K562 (cell line): ENCODE measurements at regions of chr5 and their contacts with region 1.

Region 1: GRCh38 chr5:31581498-31582099 is 49.5 kb downstream of the C5orf22 start:
- DNase-seq: peak in 3 of 4 experiments; percentile 31 to 52 (median 33)
- ATAC-seq: peak; percentile 51; the same call in 1 of the 3 replicates
- H3K4me3 ChIP-seq: no peak overlapping the region
- H3K27ac ChIP-seq: no peak overlapping the region
- H3K4me1 ChIP-seq: no peaks in the 10 kb centered on the region
- H3K27me3 ChIP-seq: peaks cover 0 to 5% of the 10 kb centered on the region in 2 experiments; a peak in 2 of 5 replicates
- CTCF ChIP-seq: peak; percentile 20 to 79 (median 51); a peak in 3 of 6 replicates
- EP300 ChIP-seq: no peak
- POLR2A ChIP-seq: no peak
- RAD21 ChIP-seq: peak; percentile 83 to 87

Region 2: DNA sequence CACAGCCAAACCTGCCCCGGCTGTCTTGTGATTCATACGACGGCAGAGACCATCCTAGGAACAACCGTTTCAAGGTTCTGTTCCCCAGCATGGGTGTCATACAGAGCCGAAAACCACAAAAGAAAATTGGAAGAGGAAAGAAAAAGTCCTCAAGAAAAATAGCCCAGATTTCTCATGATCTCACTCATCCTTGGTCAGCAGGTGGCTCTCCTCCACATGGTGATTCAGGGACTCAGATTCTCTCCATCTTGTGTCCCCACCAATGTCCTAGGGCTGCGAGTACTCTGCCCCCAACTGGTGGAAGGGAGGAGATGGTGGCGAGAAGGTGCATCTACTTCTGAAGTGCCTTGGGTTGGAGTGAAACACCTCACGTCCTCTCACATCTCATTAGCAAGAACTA is 83.0 kb after region 1 on chr5:
- CTCF ChIA-PET with region 1: no interaction called
- POLR2A ChIA-PET with region 1: no interaction called
- in situ Hi-C with region 1: no loop called
- intact Hi-C with region 1: loop called (anchors 5 kb)
- DNase-seq: peak; percentile 50 to 73 (median 60)
- ATAC-seq: peak; percentile 98
- H3K4me3 ChIP-seq: no peak overlapping the region
- H3K27ac ChIP-seq: no peak overlapping the region
- H3K4me1 ChIP-seq: no peaks in the 10 kb centered on the region
- H3K27me3 ChIP-seq: peaks cover 3 to 21% of the 10 kb centered on the region in 2 experiments; a peak in 3 of 5 replicates
- CTCF ChIP-seq: peak; percentile 73 to 93 (median 77)
- EP300 ChIP-seq: no peak
- POLR2A ChIP-seq: no peak
- RAD21 ChIP-seq: peak in 1 of 2 experiments; percentile 70; a peak in 2 of 4 replicates

Region 3: DNA sequence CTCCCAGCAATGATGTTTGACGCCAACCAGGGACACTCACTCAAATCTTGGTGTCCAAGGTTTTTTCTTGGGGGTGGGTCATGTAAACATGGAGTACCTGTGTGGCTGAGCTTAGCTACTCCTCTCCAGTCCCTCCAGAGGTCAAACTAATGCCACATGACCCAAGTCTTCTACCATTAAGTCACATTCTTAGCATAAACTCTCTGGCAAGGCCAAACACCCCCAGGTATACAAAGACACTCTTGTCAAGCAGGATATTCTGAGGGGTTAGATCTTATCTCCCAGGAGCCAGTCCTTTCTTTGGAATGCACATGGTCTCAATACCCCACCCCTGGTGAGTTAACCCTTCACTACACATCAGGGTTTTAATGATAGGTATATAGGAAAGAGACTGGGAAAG is 218.8 kb after region 1 on chr5:
- CTCF ChIA-PET with region 1: no interaction called
- POLR2A ChIA-PET with region 1: no interaction called
- in situ Hi-C with region 1: loop called (anchors 5 kb)
- intact Hi-C with region 1: no loop called
- DNase-seq: no peak
- ATAC-seq: no peak
- H3K4me3 ChIP-seq: no peak overlapping the region
- H3K27ac ChIP-seq: no peak overlapping the region
- H3K4me1 ChIP-seq: no peaks in the 10 kb centered on the region
- H3K27me3 ChIP-seq: peaks cover under 1 to 24% of the 10 kb centered on the region in 2 experiments; a peak in 3 of 5 replicates
- CTCF ChIP-seq: no peak
- EP300 ChIP-seq: no peak
- POLR2A ChIP-seq: no peak
- RAD21 ChIP-seq: no peak

Region 4: DNA sequence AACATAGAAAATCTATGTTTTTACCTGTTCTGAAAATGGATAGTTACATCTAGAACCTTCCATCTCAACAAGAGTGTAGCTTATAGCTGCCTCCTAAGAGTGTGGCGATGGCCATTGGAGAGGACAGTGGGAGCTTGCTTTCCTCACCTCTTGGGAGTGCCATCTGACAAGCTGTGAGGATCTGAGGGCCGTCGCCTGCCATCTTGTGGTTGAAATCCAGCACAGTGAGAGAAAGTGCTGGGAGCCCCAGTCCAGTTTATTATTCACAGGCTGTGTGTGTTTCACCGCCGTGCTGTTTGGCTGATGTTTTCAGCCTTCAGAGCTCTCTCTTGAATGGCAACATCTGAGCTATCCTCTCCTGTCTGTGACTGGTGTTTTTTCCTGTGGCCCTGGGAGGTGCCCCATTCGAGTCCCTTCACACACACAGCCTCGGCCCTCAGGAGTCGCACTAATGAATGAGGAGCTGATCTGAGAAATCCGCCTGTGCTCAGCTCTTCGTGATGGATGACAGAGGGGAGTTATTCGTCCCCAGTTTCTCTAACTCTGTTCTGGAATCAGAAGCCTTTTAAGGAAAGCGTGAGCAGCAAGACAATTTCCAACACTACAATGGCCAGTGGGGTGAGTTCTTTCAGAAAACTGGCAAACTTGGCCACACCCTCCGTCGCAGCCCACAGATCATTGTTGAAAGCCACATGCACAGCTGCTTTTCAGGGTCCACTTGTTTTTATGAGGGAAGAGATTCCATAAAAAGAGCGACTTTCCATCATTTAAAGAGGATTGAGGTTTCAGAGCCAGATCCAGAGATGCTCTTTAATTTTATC is 227.7 kb after region 1 on chr5:
- CTCF ChIA-PET with region 1: interaction called, 15 read pairs
- POLR2A ChIA-PET with region 1: no interaction called
- in situ Hi-C with region 1: loop called (anchors 5 kb)
- intact Hi-C with region 1: loop called (anchors 1 kb)
- DNase-seq: peak; percentile 39 to 76 (median 57)
- ATAC-seq: peak; percentile 98
- H3K4me3 ChIP-seq: no peak overlapping the region
- H3K27ac ChIP-seq: no peak overlapping the region
- H3K4me1 ChIP-seq: no peaks in the 10 kb centered on the region
- H3K27me3 ChIP-seq: peaks cover 7 to 25% of the 10 kb centered on the region in 2 experiments; a peak in 3 of 5 replicates
- CTCF ChIP-seq: peak; percentile 74 to 98 (median 96)
- EP300 ChIP-seq: no peak
- POLR2A ChIP-seq: no peak
- RAD21 ChIP-seq: peak; percentile 76 to 87

Region 5: DNA sequence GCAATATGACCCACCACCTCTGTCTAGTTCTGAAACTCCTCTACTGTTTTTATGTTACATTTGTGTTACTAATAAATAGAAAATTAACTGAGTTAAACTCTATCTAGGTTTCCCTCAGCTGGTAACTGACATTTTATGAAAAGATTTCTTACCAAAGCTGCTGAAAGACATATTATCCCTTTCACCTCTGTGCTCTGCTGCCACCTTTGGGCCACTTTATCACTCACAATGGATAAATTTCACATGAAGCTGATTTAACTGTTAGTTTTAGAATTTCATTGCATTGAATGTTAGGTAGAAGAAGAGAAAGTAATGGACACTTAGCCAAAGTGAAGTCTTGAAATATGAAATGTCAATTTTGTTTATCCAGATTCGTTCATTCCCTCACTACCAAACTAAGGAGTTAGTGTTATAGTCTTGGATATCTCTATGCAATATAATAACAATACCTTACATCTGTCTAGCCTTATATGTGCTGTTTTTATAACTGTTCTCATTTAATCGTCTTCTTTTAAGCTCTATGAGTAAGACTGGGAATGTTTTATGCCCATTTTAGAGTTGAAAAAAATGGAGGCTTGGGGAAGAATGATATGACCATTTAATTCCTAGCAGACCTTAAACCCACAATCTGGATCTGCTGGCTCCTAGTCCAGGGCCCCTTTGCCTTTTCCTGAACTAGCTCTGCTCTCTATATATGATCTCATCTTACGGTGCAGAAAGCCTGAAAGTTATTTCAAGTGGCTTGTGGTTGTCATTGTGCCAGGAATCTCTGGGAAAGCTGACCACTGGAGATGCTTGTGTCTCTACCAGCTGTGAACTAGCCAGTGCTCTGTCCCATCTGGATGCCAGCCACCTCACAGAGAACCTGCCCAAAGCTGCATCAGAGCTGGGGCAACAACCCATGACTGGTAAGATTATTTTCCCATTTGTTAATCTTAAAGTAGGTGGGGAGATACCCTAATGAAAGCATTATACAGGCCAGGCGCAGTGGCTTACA is 495.4 kb after region 1 on chr5:
- CTCF ChIA-PET with region 1: interaction called, 6 read pairs
- POLR2A ChIA-PET with region 1: interaction called, 3 read pairs
- in situ Hi-C with region 1: no loop called
- intact Hi-C with region 1: loop called (anchors 2 kb)
- DNase-seq: peak; percentile 42 to 64 (median 44)
- ATAC-seq: peak; percentile 74
- H3K4me3 ChIP-seq: no peak overlapping the region
- H3K27ac ChIP-seq: no peak overlapping the region
- H3K4me1 ChIP-seq: no peaks in the 10 kb centered on the region
- H3K27me3 ChIP-seq: peaks cover 3 to 32% of the 10 kb centered on the region in 2 experiments; a peak in 3 of 5 replicates
- CTCF ChIP-seq: peak; percentile 69 to 86 (median 72); a peak in 5 of 6 replicates
- EP300 ChIP-seq: no peak
- POLR2A ChIP-seq: no peak
- RAD21 ChIP-seq: peak; percentile 67 to 89